A549 (cell line): ENCODE measurements at regions of chr1 and their contacts with region 1.

Region 1: GRCh38 chr1:204398217-204399081 is 13.2 kb downstream of the PPP1R15B start:
- DNase-seq: peak; percentile 93 to 96
- ATAC-seq: peak; percentile 92 to 99
- H3K4me3 ChIP-seq: no peak overlapping the region
- H3K27ac ChIP-seq: no peak overlapping the region
- H3K4me1 ChIP-seq: peaks cover 7% of the 10 kb centered on the region; the same call in 2 of the 3 replicates
- CTCF ChIP-seq: peak; percentile 88
- EP300 ChIP-seq: no peak
- POLR2A ChIP-seq: no peak
- RAD21 ChIP-seq: peak; percentile 71 to 72

Region 2: DNA sequence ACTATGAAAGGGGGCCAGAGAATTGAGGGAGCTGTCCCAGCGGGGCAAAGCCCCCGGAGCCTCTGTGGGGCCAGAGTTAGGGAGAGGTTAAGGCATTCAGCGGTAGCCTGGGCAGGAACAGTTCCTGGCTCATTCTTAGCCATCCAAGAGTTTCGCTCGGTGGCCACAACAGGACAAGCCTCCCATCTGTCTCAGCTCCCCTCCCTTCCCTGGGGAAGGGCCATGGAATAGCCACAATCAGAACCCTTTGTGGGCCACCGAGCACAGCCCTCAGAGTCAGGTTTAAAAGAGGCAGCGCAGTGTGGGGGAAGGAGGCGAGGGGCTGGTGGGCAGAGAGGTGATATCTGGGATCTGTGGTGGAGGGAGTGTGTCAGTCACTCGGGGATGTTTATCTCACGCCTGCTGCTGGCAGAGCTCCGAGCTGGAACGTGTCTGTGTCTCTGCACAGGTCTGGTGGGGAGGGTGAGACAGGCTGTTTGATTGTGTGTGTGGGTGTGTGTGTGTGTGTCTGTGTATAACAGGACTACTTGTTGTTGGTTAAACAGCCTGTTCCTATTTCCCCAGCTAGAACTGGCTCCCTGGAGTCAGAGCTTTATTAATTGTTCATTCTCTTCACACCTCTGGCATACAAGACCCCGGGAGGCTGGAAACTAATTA is 135.1 kb before region 1 on chr1:
- CTCF ChIA-PET with region 1: interaction called, 15 read pairs
- POLR2A ChIA-PET with region 1: no interaction called
- DNase-seq: no peak
- ATAC-seq: no peak
- H3K4me3 ChIP-seq: no peak overlapping the region
- H3K27ac ChIP-seq: no peak overlapping the region
- H3K4me1 ChIP-seq: peaks cover 43% of the 10 kb centered on the region
- CTCF ChIP-seq: no peak
- EP300 ChIP-seq: no peak
- POLR2A ChIP-seq: no peak
- RAD21 ChIP-seq: no peak

Region 3: GRCh38 chr1:204377795-204378608 is 20.4 kb before region 1 on chr1:
- CTCF ChIA-PET with region 1: interaction called, 94 read pairs
- POLR2A ChIA-PET with region 1: interaction called, 34 read pairs
- DNase-seq: peak; percentile 59 to 64
- ATAC-seq: peak; percentile 79 to 80
- H3K4me3 ChIP-seq: peak overlapping the region; percentile 76
- H3K27ac ChIP-seq: peak overlapping the region; percentile 94 to 95
- H3K4me1 ChIP-seq: peaks cover 33% of the 10 kb centered on the region
- CTCF ChIP-seq: no peak
- EP300 ChIP-seq: no peak
- POLR2A ChIP-seq: peak; percentile 42
- RAD21 ChIP-seq: no peak

Region 4: DNA sequence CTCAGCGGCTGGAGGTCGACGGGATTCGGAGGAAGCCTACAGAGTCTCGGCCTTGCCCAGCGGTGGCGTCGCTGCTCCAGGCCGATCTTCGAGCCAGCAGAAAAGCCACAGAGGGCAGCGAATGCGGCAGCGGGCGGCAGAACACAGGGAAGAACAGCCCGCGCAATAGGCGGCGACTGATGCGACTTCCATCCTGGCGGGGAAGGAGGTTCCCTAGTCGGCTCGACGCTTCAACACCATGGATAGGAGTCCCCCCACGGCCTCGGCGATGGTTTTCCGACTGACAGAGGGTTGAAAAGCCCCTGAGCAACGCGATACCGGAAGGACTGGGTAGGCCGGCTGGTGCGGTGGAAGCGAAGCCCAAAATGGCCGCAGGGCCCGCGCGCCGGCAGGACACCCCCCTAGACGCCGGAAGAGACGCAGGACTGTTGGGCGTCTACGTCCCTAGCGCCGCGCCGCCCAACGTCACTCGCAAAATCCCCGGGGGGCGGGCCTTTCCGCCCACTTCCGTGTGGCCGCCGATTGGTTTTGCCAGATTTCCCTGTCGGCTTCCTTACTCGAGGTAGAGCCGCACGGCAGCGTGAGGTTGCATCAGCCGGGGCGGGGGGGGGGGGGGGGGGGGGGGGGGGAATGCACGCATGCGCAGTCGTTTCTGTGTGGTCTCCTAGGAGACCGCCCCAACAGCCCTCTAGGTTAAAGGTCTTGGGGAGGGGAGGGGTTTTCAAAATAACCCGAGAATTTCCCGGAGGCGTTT is 13.2 kb after region 1 on chr1 and contains the start of gene PPP1R15B:
- CTCF ChIA-PET with region 1: interaction called, 60 read pairs
- POLR2A ChIA-PET with region 1: interaction called, 16 read pairs
- DNase-seq: peak; percentile 94 to 99
- ATAC-seq: peak; percentile 92 to 94
- H3K4me3 ChIP-seq: peak within 1 kb of the TSS; percentile 94
- H3K27ac ChIP-seq: peak within 1 kb of the TSS; percentile 98 to 100
- H3K4me1 ChIP-seq: peaks cover 32% of the 10 kb centered on the region
- CTCF ChIP-seq: no peak
- EP300 ChIP-seq: peak in 1 of 2 experiments; percentile 30; a peak in 1 of 5 replicates
- POLR2A ChIP-seq: peak; percentile 80
- RAD21 ChIP-seq: peak in 1 of 2 experiments; percentile 10; a peak in 1 of 5 replicates
- polyA plus RNA-seq, gene PPP1R15B: 49.1 and 51.9 TPM in 2 replicates

Region 5: GRCh38 chr1:204426029-204426436 is 27.6 kb after region 1 on chr1:
- CTCF ChIA-PET with region 1: interaction called, 20 read pairs
- POLR2A ChIA-PET with region 1: no interaction called
- DNase-seq: peak; percentile 71 to 76
- ATAC-seq: peak; percentile 88 to 93
- H3K4me3 ChIP-seq: no peak overlapping the region
- H3K27ac ChIP-seq: peak overlapping the region; percentile 90 to 98
- H3K4me1 ChIP-seq: peaks cover 49% of the 10 kb centered on the region
- CTCF ChIP-seq: no peak
- EP300 ChIP-seq: peak in 1 of 2 experiments; percentile 20; a peak in 1 of 5 replicates
- POLR2A ChIP-seq: no peak
- RAD21 ChIP-seq: no peak

Region 6: GRCh38 chr1:204494281-204495077 is 96.0 kb after region 1 on chr1 and contains the start of gene PIK3C2B:
- CTCF ChIA-PET with region 1: interaction called, 34 read pairs
- POLR2A ChIA-PET with region 1: interaction called, 5 read pairs
- DNase-seq: peak; percentile 85 to 97
- ATAC-seq: peak; percentile 95 to 97
- H3K4me3 ChIP-seq: peak within 1 kb of the TSS; percentile 70
- H3K27ac ChIP-seq: peak within 1 kb of the TSS; percentile 87 to 94
- H3K4me1 ChIP-seq: peaks cover 24% of the 10 kb centered on the region; the same call in 2 of the 3 replicates
- CTCF ChIP-seq: peak; percentile 20; the same call in 2 of the 3 replicates
- EP300 ChIP-seq: no peak
- POLR2A ChIP-seq: peak; percentile 93
- RAD21 ChIP-seq: peak; percentile 26 to 55; a peak in 3 of 5 replicates
- polyA plus RNA-seq, gene PIK3C2B: 9.2 and 13.0 TPM in 2 replicates

Region 7: DNA sequence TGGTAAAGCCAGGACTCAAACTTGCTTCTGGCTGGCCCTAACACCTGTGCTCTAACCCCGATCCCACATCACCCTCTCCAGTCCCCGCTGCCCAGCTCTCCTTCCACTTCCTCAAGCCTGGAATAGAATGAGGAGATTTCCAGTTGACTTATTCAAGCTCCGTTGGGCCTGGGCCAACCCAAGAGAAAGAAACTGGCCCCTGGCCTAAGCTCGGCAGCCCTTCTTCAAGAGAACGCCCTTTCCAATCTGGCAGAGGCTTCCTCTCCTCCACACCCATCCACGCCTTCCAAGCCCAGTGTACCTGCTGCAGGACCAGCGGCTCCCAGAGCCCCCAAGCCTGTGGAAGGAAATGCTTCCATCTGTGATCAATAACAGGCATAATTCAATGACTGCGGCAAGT is 235.2 kb after region 1 on chr1:
- CTCF ChIA-PET with region 1: no interaction called
- POLR2A ChIA-PET with region 1: no interaction called
- DNase-seq: no peak
- ATAC-seq: no peak
- H3K4me3 ChIP-seq: no peak overlapping the region
- H3K27ac ChIP-seq: no peak overlapping the region
- H3K4me1 ChIP-seq: no peaks in the 10 kb centered on the region
- CTCF ChIP-seq: no peak
- EP300 ChIP-seq: no peak
- POLR2A ChIP-seq: no peak
- RAD21 ChIP-seq: no peak